Gastrocnemius medialis (tissue), 4 donors: ENCODE measurements at regions of chr5 and their contacts with region 1.

Region 1: GRCh38 chr5:113204525-113205161 is 228.0 kb downstream of the DCP2 start:
- DNase-seq: peak; percentile 45 to 70
- ATAC-seq: peak; percentile 84 to 86
- H3K4me3 ChIP-seq: no peak overlapping the region
- H3K27ac ChIP-seq: peak overlapping the region in 1 of 4 donors; percentile 73
- H3K4me1 ChIP-seq: peaks cover 9 to 55% of the 10 kb centered on the region in 2 donors
- H3K27me3 ChIP-seq: no peaks in the 10 kb centered on the region
- CTCF ChIP-seq: no peak
- POLR2A ChIP-seq: no peak

Region 2: GRCh38 chr5:112921031-112921832 is 283.4 kb before region 1 on chr5:
- in situ Hi-C with region 1: no loop called
- intact Hi-C with region 1: no loop called
- DNase-seq: peak; percentile 52 to 74
- ATAC-seq: peak; percentile 74 to 77
- H3K4me3 ChIP-seq: peak overlapping the region; percentile 65 to 100 (median 88)
- H3K27ac ChIP-seq: peak overlapping the region; percentile 93 to 100 (median 98)
- H3K4me1 ChIP-seq: peaks cover 39 to 51% of the 10 kb centered on the region in 2 donors
- H3K27me3 ChIP-seq: no peaks in the 10 kb centered on the region
- CTCF ChIP-seq: no peak
- POLR2A ChIP-seq: peak; percentile 51 to 56

Region 3: GRCh38 chr5:113232667-113233066 is 28.0 kb after region 1 on chr5:
- in situ Hi-C with region 1: no loop called
- intact Hi-C with region 1: loop called (anchors 1 kb)
- DNase-seq: no peak
- ATAC-seq: peak in 1 of 2 donors; percentile 48
- H3K4me3 ChIP-seq: no peak overlapping the region
- H3K27ac ChIP-seq: peak overlapping the region in 2 of 4 donors; percentile 5 to 68
- H3K4me1 ChIP-seq: peaks cover 17 to 44% of the 10 kb centered on the region in 2 donors
- H3K27me3 ChIP-seq: no peaks in the 10 kb centered on the region
- CTCF ChIP-seq: no peak
- POLR2A ChIP-seq: no peak